Thyroid gland (tissue), 4 donors: ENCODE measurements at regions of chr9 and their contacts with region 1.

Region 1: DNA sequence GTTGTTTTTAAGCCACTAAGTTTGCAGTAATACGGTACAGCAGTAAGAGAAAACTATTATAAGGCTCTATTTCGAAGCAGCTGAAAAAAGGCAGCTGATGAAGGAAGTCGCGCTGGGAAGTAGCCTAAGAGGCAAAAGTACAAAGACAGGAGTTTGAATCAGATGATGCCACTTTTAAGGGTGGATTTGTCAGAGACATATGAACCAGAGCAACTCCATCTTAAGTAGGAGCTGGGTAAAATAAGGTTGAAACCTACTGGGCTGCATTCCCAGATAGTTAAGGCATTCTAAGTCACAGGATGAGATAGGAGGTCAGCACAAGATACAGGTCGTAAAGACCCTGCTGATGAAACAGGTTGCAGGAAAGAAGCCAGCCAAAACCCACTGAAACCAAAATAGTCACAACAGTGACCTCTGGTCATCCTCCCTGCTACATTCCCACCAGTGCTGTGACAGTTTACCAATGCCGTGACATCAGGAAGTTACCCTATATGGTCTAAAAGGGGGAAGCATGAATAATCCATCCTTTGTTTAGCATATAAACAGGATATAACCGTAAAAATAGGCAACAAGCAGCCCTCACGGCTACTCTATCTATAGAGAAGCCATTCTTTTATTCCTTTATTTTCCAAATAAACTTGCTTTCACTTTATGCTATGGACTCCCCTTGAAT is 91.8 kb upstream of the PRSS3 start:
- DNase-seq: no peak
- H3K4me3 ChIP-seq: no peak overlapping the region
- H3K27ac ChIP-seq: no peak overlapping the region
- H3K4me1 ChIP-seq: no peaks in the 10 kb centered on the region
- H3K27me3 ChIP-seq: no peaks in the 10 kb centered on the region
- CTCF ChIP-seq: no peak
- POLR2A ChIP-seq: no peak

Region 2: DNA sequence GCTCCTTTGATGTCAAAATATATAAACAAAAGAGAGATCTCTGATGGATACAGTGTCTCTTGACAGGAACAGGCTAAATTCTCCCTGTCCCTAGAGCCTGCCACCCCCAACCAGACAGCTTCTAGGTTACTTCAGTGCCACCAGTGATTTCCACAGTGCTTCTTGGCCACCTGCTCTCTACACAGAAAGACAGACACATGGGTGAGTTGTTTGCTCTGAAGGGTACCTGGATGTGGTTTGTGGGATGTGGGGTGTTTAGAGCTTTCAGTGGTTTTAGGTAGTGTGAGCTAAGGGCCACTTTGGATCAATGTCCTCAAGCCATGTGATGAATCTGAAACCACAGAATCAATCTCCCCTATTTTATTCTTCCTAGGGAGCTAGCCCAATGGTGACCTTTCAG is 54.1 kb before region 1 on chr9:
- intact Hi-C with region 1: loop called (anchors 10 kb)
- DNase-seq: no peak
- H3K4me3 ChIP-seq: no peak overlapping the region
- H3K27ac ChIP-seq: no peak overlapping the region
- H3K4me1 ChIP-seq: no peaks in the 10 kb centered on the region
- H3K27me3 ChIP-seq: no peaks in the 10 kb centered on the region
- CTCF ChIP-seq: no peak
- POLR2A ChIP-seq: no peak